ENCODE measurements at regions of chr21 and their contacts with region 1.

Region 1: DNA sequence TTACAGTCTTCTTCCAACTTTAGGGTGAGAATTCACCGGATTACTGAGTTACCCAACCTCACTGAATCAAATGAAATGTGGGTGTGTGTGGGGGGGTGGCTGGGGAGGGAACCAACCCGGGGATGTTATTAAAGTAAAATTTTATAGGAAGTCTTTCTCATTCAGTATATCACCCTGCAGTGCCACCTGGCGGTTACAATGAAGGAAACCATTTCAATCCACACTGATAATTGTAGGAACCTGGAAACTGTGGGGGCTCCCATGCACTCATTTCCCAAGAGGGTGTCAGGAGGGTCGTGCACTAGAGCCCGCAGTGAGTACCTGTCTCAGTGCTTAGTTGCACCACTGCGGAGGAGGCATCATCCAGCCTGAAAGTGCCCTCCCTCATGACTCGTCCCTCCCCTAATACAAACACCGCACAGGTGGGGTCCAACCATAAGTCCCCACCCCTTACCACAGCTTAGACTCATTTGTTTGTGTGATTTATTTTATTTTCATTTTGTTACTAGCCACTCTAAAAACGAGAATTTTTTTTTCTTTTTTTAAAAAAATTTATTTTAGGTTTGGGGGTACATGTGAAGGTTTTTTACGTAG is 29.1 kb upstream of the IGSF5 start:
- DNase-seq: peak; percentile 54
- H3K4me3 ChIP-seq: no peak overlapping the region; a peak in 1 of 4 replicates
- H3K27ac ChIP-seq: no peak overlapping the region
- H3K4me1 ChIP-seq: no peaks in the 10 kb centered on the region
- H3K27me3 ChIP-seq: no peaks in the 10 kb centered on the region
- CTCF ChIP-seq: peak; percentile 76
- EP300 ChIP-seq: no peak
- RAD21 ChIP-seq: peak; percentile 80

Region 2: GRCh38 chr21:39705849-39706248 is 10.1 kb before region 1 on chr21:
- CTCF ChIA-PET with region 1: interaction called, 13 read pairs
- POLR2A ChIA-PET with region 1: no interaction called
- DNase-seq: no peak
- H3K4me3 ChIP-seq: no peak overlapping the region
- H3K27ac ChIP-seq: no peak overlapping the region
- H3K4me1 ChIP-seq: no peaks in the 10 kb centered on the region
- H3K27me3 ChIP-seq: no peaks in the 10 kb centered on the region
- CTCF ChIP-seq: peak; percentile 43
- EP300 ChIP-seq: no peak
- RAD21 ChIP-seq: peak; percentile 57

Region 3: GRCh38 chr21:39726132-39726727 is 10.3 kb after region 1 on chr21:
- CTCF ChIA-PET with region 1: interaction called, 12 read pairs
- POLR2A ChIA-PET with region 1: no interaction called
- DNase-seq: no peak
- H3K4me3 ChIP-seq: no peak overlapping the region
- H3K27ac ChIP-seq: no peak overlapping the region
- H3K4me1 ChIP-seq: peaks cover 0 to 3% of the 10 kb centered on the region in 2 experiments; a peak in 2 of 4 replicates
- H3K27me3 ChIP-seq: no peaks in the 10 kb centered on the region
- CTCF ChIP-seq: peak; percentile 26
- EP300 ChIP-seq: no peak
- RAD21 ChIP-seq: no peak